Calu3 (cell line): ENCODE measurements at regions of chr3 and their contacts with region 1.

Region 1: GRCh38 chr3:191356611-191357439 is 26.5 kb upstream of the UTS2B start:
- DNase-seq: peak; percentile 68
- H3K4me3 Mint-ChIP-seq: peak overlapping the region; percentile 58
- H3K27ac Mint-ChIP-seq: peak overlapping the region; percentile 76
- H3K4me1 Mint-ChIP-seq: peaks cover 48% of the 10 kb centered on the region
- H3K27me3 Mint-ChIP-seq: no peaks in the 10 kb centered on the region
- CTCF ChIP-seq: no peak

Region 2: DNA sequence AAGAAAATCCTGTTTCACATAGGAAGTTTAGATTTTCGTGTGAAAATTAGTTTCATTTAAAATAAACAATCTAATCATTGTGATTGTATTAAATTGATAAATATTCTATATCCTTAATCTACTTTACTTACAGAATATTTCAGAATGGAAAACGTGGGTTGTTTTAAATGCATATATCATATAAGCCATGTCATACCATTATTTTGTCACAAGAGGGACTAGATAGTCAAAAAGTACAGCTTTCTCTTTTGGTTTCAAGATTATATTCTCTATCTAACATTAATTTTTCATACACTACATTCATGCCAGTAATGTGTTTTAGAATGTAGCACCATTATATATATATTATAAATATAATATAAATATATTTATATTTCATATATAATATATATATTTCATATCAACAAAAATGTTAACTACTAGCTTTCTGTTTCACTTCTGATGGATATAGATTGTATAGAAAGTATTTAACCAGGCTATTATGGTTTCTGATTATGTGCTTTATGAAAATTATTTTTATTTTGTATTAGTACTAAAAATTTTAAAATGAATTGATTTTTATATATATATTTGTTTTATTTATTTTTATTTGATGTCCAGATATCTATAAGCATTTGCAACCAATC is 112.5 kb before region 1 on chr3:
- CTCF ChIA-PET with region 1: interaction called, 6 read pairs
- intact Hi-C with region 1: loop called (anchors 10 kb)
- DNase-seq: no peak
- H3K4me3 Mint-ChIP-seq: no peak overlapping the region
- H3K27ac Mint-ChIP-seq: no peak overlapping the region
- H3K4me1 Mint-ChIP-seq: peaks cover 27% of the 10 kb centered on the region
- H3K27me3 Mint-ChIP-seq: no peaks in the 10 kb centered on the region
- CTCF ChIP-seq: peak; percentile 54